Right ventricle myocardium inferior (tissue), 1 donor: ENCODE measurements at regions of chr7 and their contacts with region 1.

Region 1: DNA sequence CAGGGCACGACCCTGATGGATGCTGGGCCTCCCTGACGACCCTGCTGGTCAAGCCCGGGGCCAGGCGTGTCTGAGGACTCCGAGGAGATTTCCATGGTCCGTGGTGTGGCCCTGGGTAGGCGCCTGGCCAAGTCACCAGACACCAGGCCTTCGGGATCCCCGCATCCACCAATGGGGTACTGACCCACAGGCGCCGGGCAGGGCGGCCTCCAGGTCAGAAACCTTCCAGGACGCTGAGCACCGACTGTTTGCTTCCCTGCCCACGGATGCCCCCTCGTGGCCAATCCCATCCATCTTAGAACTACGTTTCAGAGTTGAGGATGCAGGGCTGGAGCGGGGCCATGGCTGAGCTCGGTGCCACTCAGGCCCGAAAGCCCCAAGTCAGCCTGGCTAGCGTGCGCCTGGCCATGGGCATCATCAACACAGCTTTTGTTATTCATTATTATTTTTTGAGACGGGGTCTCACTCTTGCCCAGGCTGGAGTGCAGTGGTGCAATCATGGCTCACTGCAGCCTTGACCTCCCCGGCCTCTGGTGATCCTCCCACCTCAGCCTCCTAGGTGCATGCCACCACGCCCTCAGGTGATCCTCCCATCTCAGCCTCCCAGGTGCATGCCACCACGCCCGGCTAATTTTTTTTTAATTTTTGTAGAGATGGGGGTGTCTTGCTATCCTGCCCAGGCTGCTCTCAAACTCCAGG is 7.1 kb upstream of the AMZ1 start:
- DNase-seq: peak; percentile 91
- ATAC-seq: peak; percentile 75

Region 2: DNA sequence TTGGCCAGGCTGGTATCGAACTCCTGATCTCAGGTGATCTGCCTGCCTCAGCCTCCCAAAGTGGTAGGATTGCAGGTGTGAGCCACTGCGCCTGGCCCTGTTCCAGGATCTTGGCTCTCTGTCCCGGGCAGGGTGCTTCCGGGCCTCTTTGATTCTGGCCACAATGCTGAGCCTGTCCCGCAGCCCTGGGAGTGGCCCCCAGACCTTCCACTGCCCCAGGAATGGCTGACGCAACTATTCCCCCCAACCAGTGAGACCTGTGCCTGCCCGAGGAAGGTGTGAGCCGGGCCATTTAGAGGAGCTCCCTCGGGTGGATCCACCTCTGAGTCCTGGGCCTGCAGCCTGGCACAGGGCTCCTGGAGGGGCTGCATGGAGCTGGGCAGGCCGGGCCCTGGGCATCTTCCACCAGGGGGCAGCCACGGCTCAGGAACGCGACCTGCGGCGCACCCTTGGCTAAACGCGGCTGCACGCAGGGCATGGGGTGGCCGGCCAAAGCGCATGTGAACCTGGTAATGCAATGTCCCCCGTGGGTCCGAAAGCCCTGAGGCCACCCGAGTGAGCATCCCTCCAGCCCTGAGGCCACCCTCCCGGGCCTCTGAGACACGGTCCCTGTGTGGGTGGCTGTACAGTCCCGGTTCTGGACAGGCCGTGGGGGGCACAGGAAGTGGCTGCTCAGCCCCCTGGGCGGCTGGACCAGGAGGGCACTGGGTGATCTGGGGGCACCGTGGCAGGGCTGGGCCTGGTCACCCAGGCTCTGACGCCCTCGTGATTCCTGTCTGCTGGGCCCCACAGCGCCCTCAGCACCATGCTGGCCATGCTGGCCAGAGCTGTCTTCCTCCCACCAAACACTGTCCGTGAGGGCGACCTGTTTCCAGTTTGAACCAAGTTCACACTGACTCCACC is 229.5 kb before region 1 on chr7:
- intact Hi-C with region 1: loop called (anchors 5 kb)
- DNase-seq: peak; percentile 93
- ATAC-seq: peak; percentile 96

Region 3: GRCh38 chr7:2567679-2568278 is 113.2 kb before region 1 on chr7:
- intact Hi-C with region 1: loop called (anchors 1 kb)
- DNase-seq: no peak
- ATAC-seq: peak; percentile 75